ENCODE measurements at regions of chr15 and their contacts with region 1.

Region 1: GRCh38 chr15:75578948-75579920 is at the start of gene PTPN9:
- DNase-seq: peak; percentile 86
- CTCF ChIP-seq: peak; percentile 45

Region 2: DNA sequence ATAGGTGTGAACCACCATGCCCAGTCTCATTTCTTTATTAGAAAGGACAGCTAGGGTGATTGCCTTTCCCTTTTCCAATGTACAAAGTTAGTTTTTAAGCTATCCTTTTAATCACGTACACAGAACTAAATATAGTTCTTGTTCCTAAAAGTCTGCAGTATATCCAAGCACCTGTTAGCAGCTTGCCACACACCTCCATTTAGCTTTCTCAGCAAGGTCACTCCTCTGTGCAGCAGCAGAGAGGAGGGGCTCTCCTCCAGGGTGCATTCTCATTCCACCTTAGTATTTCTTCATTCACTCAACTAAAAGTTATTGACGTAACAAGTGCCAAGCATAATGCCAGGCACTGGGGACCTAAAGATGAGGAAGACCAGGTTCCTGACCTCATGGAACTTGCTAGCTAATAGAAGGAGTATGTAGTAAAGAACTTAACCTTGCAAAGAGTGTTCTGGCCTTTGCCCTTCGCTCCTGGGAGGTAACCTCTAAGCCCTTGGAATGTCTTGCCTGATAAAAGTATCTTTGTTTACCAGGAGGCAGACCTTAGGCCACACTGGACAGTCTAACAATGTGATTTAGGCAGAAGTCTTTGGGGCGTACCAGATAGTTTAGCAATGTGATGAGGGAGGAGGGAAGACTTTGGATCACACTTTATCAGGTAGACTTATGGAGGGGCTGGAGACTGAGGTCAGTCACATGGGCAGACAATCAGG is 12.6 kb after region 1 on chr15:
- CTCF ChIA-PET with region 1: interaction called, 10 read pairs
- POLR2A ChIA-PET with region 1: no interaction called
- DNase-seq: no peak
- CTCF ChIP-seq: no peak

Region 3: GRCh38 chr15:75606711-75607699 is 27.8 kb after region 1 on chr15:
- CTCF ChIA-PET with region 1: no interaction called
- POLR2A ChIA-PET with region 1: no interaction called
- DNase-seq: no peak
- CTCF ChIP-seq: no peak

Measured in GM10248 (cell line).